ENCODE measurements at regions of chr6 and their contacts with region 1.

Region 1: GRCh38 chr6:36623547-36624459 is 29.6 kb downstream of the SRSF3 start:
- DNase-seq: peak; percentile 56
- H3K4me3 ChIP-seq: no peak overlapping the region
- H3K27ac ChIP-seq: no peak overlapping the region
- H3K27me3 ChIP-seq: no peaks in the 10 kb centered on the region
- CTCF ChIP-seq: peak; percentile 90

Region 2: DNA sequence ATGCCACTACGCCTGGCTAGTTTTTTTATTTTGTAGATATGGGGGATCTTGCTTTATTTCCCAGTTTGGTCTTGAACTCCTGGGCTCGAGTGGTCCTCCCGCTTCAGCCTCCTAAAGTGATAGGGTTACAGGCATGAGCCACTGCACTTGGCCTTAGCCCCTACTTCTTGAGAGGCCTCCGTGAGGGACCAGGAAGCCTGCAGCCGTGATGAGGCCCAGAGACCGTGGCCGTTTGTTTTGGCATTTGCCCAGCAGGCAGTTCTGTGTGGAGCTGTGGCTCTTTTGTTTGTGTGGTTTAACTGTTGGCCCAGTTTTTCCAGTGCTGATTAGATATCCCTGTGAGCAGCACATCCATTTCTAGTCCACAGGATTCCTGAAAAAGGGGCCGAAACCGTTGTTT is 10.1 kb after region 1 on chr6:
- CTCF ChIA-PET with region 1: interaction called, 13 read pairs
- POLR2A ChIA-PET with region 1: interaction called, 3 read pairs
- DNase-seq: peak; percentile 60
- H3K4me3 ChIP-seq: no peak overlapping the region
- H3K27ac ChIP-seq: peak overlapping the region; percentile 47
- H3K27me3 ChIP-seq: no peaks in the 10 kb centered on the region
- CTCF ChIP-seq: no peak

Region 3: GRCh38 chr6:36666726-36667591 is 43.2 kb after region 1 on chr6:
- CTCF ChIA-PET with region 1: interaction called, 6 read pairs
- POLR2A ChIA-PET with region 1: interaction called, 11 read pairs
- DNase-seq: peak; percentile 89
- H3K4me3 ChIP-seq: 0 out of 2 replicates have a peak overlapping the region, but pooled peaks have one; percentile 13
- H3K27ac ChIP-seq: peak overlapping the region; percentile 97
- H3K27me3 ChIP-seq: no peaks in the 10 kb centered on the region
- CTCF ChIP-seq: no peak